ENCODE measurements at regions of chr3 and their contacts with region 1.

Region 1: DNA sequence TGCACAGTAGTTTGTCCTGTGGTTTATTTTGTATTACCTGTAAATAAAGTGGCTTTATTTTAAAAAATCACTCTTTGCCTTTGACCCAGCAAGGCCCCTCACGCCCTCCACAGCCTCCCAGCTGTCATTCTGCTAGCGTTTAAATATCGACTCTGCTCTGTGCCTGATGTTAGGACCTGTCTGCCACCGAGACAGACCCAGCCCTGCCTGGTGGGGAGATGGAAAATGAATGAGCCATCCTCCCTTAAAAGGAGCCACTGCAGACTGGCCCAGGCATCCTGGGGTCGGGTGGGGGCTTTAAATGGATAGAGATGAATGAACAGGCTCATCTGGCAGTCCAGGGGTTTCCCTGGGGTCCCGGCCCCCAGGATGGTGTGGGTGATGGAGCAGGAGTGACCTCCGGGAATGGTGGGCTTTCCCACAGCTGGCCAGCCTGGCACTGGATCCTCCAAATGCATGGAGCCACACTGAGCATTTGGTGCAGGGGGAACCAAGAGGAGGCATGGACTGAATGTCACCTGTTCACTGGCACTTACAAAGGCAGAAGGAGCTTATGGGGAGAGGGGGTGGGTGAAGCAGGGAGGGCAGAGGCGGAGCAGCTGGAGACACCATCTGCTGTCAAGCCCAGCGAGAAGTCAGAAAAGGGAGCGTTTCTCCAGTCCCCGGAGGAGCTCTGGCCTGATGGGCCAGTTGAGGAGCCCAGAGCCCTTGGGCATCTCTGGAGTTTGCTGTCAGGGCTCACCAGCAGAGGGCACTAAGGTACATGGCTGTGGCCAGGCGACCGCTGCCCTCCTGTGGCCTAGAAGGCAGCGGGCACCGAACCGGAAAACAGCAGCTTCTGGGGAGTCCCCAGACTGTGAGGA is 11.9 kb downstream of the GRM2 start:
- DNase-seq: peak; percentile 30
- H3K4me3 ChIP-seq: no peak overlapping the region
- H3K27ac ChIP-seq: no peak overlapping the region
- H3K4me1 ChIP-seq: no peaks in the 10 kb centered on the region
- H3K27me3 ChIP-seq: no peaks in the 10 kb centered on the region
- CTCF ChIP-seq: peak; percentile 54 to 84
- POLR2A ChIP-seq: no peak

Region 2: GRCh38 chr3:51729042-51729633 is 10.4 kb after region 1 on chr3:
- CTCF ChIA-PET with region 1: interaction called, 11 read pairs
- POLR2A ChIA-PET with region 1: no interaction called
- dilution Hi-C with region 1: no loop called
- intact Hi-C with region 1: no loop called
- DNase-seq: no peak
- H3K4me3 ChIP-seq: no peak overlapping the region
- H3K27ac ChIP-seq: no peak overlapping the region
- H3K4me1 ChIP-seq: no peaks in the 10 kb centered on the region
- H3K27me3 ChIP-seq: peaks cover 0 to 2% of the 10 kb centered on the region in 2 experiments
- CTCF ChIP-seq: no peak
- POLR2A ChIP-seq: no peak

Region 3: DNA sequence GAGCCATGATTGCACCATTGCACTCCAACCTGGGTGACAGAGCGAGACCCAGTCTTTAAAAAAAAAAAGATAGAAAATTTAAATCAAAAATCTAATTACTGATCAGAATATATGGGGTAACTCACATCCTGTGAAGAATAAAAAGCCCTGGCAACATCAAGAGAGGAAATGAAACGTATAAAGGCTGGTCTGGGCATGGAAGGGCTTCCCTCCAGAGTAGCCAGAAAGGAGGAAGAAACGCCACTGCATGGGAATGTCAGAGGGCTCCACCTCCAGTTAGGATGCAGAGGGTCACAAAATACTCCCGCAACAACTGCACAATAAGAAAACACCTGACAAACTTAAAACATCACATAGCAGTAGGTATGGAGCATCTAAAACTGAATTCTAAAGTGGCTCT is 189.2 kb after region 1 on chr3:
- CTCF ChIA-PET with region 1: no interaction called
- POLR2A ChIA-PET with region 1: no interaction called
- dilution Hi-C with region 1: no loop called
- intact Hi-C with region 1: no loop called
- DNase-seq: no peak
- H3K4me3 ChIP-seq: no peak overlapping the region
- H3K27ac ChIP-seq: no peak overlapping the region
- H3K4me1 ChIP-seq: no peaks in the 10 kb centered on the region
- H3K27me3 ChIP-seq: no peaks in the 10 kb centered on the region
- CTCF ChIP-seq: no peak
- POLR2A ChIP-seq: no peak